Cardiac septum (tissue), 1 donor: ENCODE measurements at regions of chr12 and their contacts with region 1.

Region 1: GRCh38 chr12:29552324-29552927 is 54.9 kb upstream of the OVCH1 start:
- DNase-seq: peak; percentile 80

Region 2: GRCh38 chr12:29640589-29641345 is 88.3 kb after region 1 on chr12:
- intact Hi-C with region 1: loop called (anchors 5 kb)
- DNase-seq: peak; percentile 77

Region 3: DNA sequence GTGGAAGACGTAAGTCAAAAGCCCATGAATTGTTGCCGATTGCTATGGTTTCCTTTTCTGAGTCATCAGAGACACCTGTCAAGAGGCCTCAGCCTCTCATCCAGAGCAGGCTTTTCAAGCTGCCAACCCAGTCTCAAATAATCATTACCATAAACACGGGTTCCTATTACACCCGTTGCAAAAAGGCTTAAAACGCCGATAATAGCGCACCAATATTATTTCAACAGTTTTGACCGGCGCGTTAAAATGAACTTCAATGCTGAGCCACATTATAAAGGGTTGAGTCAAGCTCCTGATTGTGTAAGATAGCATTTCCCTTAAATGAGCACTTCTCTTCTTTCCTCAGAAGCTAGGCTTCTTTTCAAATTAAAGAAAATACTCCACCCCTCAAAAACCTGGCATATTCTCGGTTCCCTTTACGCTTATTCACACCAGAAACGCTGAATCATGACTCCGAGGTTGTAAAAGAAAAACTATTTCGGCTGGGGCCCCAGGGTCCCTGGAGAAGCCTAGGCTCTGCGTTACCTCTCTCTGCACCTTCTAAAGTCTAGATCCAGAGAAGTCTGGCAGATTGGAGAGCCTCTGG is 230.0 kb after region 1 on chr12:
- intact Hi-C with region 1: loop called (anchors 5 kb)
- DNase-seq: no peak

Region 4: DNA sequence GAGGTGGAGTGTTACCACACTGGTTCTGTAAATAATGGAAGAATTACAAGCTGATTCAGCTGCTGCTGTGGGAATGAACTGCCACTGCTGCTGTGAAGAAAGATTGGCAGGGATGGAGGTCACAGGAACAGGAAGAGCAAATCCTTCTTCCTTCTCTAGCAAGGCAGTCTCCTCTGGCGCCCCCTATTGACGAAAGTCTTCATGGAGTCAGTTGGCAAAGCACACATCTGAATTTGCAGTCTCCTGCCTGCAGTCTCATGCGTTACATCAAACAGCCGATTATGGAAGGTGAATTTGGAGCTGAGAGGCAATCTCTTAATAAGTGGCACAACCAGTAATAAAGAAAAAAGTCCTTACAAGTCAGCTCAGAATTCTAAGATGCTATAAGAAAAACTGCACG is 337.3 kb after region 1 on chr12:
- intact Hi-C with region 1: loop called (anchors 5 kb)
- DNase-seq: no peak

Region 5: DNA sequence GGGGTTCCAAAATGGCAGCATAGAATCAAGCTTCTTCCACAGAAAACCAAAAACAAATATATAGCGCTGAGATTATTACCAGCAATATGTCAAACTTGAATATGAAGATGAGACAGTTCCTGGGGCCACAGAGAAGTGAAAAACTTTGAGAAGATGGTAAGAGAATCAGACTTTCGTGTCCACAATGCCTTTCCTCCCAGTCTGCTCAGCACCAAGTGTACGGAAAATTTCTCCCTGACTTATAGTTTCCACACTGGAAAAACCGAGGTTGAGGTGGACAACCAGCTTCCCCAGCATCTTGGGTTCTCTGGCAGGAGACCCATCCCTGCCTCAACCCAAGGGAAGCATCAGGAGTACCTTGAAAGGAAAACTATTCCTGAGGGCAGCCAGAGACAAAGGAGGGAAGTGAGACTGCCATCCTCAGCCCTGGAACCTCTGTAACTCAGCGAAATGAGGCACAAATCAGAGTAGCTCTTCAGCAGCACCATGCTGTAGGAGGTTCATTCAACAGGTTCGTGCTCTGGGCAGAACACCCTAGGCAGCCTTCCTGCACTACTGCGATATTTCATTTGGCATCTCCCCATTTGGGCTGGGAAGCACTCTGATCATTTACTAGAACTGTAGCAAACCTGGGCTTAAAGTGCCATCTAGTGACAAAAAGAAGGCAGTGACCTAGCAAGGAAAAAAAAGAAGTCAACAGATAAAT is 1254.7 kb after region 1 on chr12:
- intact Hi-C with region 1: loop called (anchors 10 kb)
- DNase-seq: no peak